MCF 10A (cell line): ENCODE measurements at regions of chr20 and their contacts with region 1.

Region 1: DNA sequence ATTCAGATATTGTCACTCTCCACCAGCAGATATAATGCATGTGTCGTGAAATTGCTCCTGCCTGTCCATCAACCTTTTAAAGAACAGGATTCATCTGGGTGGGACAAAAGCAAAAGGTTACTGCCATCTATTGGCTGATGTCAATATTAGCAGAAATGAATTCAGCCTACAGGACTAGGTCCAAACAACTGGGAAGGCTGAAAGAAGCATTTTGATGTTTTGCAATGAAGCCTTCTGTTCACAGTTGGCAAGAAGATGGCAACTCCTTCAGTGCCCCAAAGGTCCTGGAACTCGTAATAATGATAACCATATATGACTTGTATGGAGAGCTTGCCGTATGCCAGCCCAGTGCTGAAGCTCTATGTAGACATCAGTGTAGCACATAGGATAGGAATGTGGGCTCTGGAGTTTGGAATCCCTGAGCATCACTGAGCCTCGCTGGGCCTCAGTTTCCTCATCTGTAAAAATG is 7.5 kb downstream of the BCAS1 start:
- DNase-seq: peak; percentile 64
- H3K4me3 Mint-ChIP-seq: no peak overlapping the region
- H3K27ac Mint-ChIP-seq: no peak overlapping the region
- H3K4me1 Mint-ChIP-seq: peaks cover 21% of the 10 kb centered on the region
- H3K27me3 Mint-ChIP-seq: no peaks in the 10 kb centered on the region
- CTCF ChIP-seq: peak; percentile 59

Region 2: GRCh38 chr20:53773792-53774401 is 288.9 kb before region 1 on chr20:
- CTCF ChIA-PET with region 1: no interaction called
- POLR2A ChIA-PET with region 1: no interaction called
- intact Hi-C with region 1: loop called (anchors 10 kb)
- DNase-seq: peak; percentile 79
- H3K4me3 Mint-ChIP-seq: no peak overlapping the region
- H3K27ac Mint-ChIP-seq: peak overlapping the region; percentile 92
- H3K4me1 Mint-ChIP-seq: peaks cover 21% of the 10 kb centered on the region
- H3K27me3 Mint-ChIP-seq: no peaks in the 10 kb centered on the region
- CTCF ChIP-seq: no peak

Region 3: GRCh38 chr20:53899351-53900167 is 163.3 kb before region 1 on chr20:
- CTCF ChIA-PET with region 1: interaction called, 18 read pairs
- POLR2A ChIA-PET with region 1: interaction called, 3 read pairs
- intact Hi-C with region 1: no loop called
- DNase-seq: peak; percentile 89
- H3K4me3 Mint-ChIP-seq: peak overlapping the region; percentile 39
- H3K27ac Mint-ChIP-seq: peak overlapping the region; percentile 75
- H3K4me1 Mint-ChIP-seq: peaks cover 27% of the 10 kb centered on the region
- H3K27me3 Mint-ChIP-seq: no peaks in the 10 kb centered on the region
- CTCF ChIP-seq: no peak

Region 4: GRCh38 chr20:53905019-53905847 is 157.6 kb before region 1 on chr20:
- CTCF ChIA-PET with region 1: interaction called, 18 read pairs
- POLR2A ChIA-PET with region 1: interaction called, 11 read pairs
- intact Hi-C with region 1: no loop called
- DNase-seq: no peak
- H3K4me3 Mint-ChIP-seq: no peak overlapping the region
- H3K27ac Mint-ChIP-seq: peak overlapping the region; percentile 93
- H3K4me1 Mint-ChIP-seq: peaks cover 52% of the 10 kb centered on the region
- H3K27me3 Mint-ChIP-seq: no peaks in the 10 kb centered on the region
- CTCF ChIP-seq: no peak

Region 5: DNA sequence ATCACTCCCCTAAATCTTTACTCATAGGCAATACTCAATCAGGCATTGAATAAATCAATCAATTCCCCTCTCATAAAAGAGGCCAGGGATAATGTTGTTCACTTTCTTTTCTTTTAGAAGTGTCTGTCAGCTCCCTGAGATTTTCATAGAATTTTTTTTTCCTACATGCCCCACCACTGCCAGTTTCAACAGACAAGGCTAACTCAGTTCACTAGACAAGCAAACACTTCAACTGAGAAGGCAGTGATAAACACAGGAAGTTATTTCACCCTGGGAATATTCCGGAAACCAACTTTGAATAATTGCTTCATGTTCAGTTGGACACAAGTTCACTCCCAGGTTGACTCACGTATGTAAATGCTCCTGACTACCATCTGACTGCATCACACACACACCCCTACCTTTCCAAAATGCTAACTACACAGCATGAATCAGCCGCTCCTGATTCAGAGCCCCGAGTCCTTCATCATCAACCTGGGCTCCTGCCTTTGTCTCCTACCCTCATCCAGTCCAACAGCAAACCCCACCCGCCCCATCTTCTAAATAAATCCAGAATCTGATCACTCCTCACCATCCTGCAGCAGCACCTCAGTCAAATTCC is 136.3 kb before region 1 on chr20:
- CTCF ChIA-PET with region 1: interaction called, 27 read pairs
- POLR2A ChIA-PET with region 1: interaction called, 8 read pairs
- intact Hi-C with region 1: no loop called
- DNase-seq: peak; percentile 97
- H3K4me3 Mint-ChIP-seq: peak overlapping the region; percentile 8
- H3K27ac Mint-ChIP-seq: peak overlapping the region; percentile 92
- H3K4me1 Mint-ChIP-seq: peaks cover 24% of the 10 kb centered on the region
- H3K27me3 Mint-ChIP-seq: no peaks in the 10 kb centered on the region
- CTCF ChIP-seq: no peak

Region 6: GRCh38 chr20:53934421-53935343 is 128.2 kb before region 1 on chr20:
- CTCF ChIA-PET with region 1: interaction called, 56 read pairs
- POLR2A ChIA-PET with region 1: interaction called, 18 read pairs
- intact Hi-C with region 1: no loop called
- DNase-seq: no peak
- H3K4me3 Mint-ChIP-seq: no peak overlapping the region
- H3K27ac Mint-ChIP-seq: no peak overlapping the region
- H3K4me1 Mint-ChIP-seq: peaks cover 15% of the 10 kb centered on the region
- H3K27me3 Mint-ChIP-seq: no peaks in the 10 kb centered on the region
- CTCF ChIP-seq: no peak

Region 7: GRCh38 chr20:53939572-53940359 is 123.1 kb before region 1 on chr20:
- CTCF ChIA-PET with region 1: interaction called, 56 read pairs
- POLR2A ChIA-PET with region 1: interaction called, 18 read pairs
- intact Hi-C with region 1: loop called (anchors 1 kb)
- DNase-seq: peak; percentile 95
- H3K4me3 Mint-ChIP-seq: no peak overlapping the region
- H3K27ac Mint-ChIP-seq: peak overlapping the region; percentile 18
- H3K4me1 Mint-ChIP-seq: peaks cover 19% of the 10 kb centered on the region
- H3K27me3 Mint-ChIP-seq: no peaks in the 10 kb centered on the region
- CTCF ChIP-seq: peak; percentile 73